MCF 10A (cell line): ENCODE measurements at regions of chr1 and their contacts with region 1.

Region 1: DNA sequence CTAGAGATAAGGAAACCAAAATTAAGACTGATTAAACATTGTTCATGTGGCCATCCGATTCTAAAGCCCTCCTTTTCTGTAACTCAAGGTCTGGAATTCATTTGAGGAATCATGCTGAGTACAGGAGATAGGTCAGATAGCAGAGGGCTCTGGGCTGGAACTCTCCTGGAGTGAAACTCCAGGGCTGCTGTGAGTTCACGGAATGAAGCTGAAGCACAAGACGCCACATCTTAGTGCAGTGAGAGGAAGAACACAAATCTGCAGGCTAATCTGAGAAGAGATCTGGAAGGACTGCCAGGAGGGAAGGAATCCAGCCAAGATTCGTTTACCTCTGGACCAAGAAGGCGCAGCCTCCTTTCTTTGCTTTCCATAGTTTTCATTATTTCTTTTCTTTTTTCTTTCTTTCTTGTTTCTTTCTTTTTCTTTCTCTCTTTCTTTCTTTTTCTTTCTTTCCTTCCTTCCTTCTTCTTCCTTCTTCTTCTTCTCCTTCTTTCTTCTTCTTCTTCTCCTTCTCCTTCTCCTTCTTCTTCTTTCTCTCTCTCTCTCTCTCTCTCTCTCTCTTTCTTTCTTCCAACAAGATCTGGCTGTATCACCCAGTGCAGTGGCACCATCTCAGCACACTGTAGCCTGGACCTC is 74.8 kb upstream of the ATP1B1 start:
- DNase-seq: no peak
- H3K4me3 Mint-ChIP-seq: no peak overlapping the region
- H3K27ac Mint-ChIP-seq: no peak overlapping the region
- H3K4me1 Mint-ChIP-seq: peaks cover 6% of the 10 kb centered on the region
- H3K27me3 Mint-ChIP-seq: no peaks in the 10 kb centered on the region
- CTCF ChIP-seq: no peak

Region 2: DNA sequence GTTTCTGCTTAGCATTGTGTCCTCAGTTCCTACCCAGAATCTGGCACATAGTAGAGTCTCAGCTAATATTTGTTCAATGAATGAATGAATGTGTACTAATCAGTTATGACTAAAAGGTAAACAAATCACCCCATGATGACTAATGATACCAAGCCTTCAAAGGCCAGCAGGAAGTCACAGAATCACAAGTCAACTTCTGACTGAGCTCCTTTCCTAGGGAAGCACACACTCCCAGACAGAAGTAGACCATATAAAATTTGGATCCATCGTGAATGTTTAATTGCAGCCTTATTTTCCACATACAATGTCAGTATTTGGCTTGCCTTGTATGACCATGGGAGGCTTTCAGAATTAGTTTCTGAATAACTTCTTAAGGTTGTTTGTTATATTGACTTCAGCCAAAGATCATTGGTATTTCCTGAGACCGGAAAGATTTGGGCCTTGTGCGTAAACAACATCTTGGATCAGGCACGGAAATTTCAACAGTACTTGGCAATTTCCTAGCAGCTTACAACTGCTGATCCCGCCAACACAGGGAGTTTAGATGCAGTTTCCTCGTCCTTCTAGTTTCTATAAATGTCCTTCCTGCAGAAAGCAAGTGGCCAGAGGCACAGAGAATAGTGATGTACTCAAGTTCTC is 111.1 kb before region 1 on chr1:
- CTCF ChIA-PET with region 1: no interaction called
- POLR2A ChIA-PET with region 1: no interaction called
- intact Hi-C with region 1: loop called (anchors 10 kb)
- DNase-seq: peak; percentile 55
- H3K4me3 Mint-ChIP-seq: no peak overlapping the region
- H3K27ac Mint-ChIP-seq: no peak overlapping the region
- H3K4me1 Mint-ChIP-seq: peaks cover 11% of the 10 kb centered on the region
- H3K27me3 Mint-ChIP-seq: no peaks in the 10 kb centered on the region
- CTCF ChIP-seq: no peak

Region 3: GRCh38 chr1:169003864-169004516 is 27.7 kb before region 1 on chr1:
- CTCF ChIA-PET with region 1: no interaction called
- POLR2A ChIA-PET with region 1: no interaction called
- intact Hi-C with region 1: no loop called
- DNase-seq: peak; percentile 47
- H3K4me3 Mint-ChIP-seq: no peak overlapping the region
- H3K27ac Mint-ChIP-seq: no peak overlapping the region
- H3K4me1 Mint-ChIP-seq: peaks cover 6% of the 10 kb centered on the region
- H3K27me3 Mint-ChIP-seq: no peaks in the 10 kb centered on the region
- CTCF ChIP-seq: no peak